HEK293T (cell line): ENCODE measurements at regions of chr11 and their contacts with region 1.

Region 1: DNA sequence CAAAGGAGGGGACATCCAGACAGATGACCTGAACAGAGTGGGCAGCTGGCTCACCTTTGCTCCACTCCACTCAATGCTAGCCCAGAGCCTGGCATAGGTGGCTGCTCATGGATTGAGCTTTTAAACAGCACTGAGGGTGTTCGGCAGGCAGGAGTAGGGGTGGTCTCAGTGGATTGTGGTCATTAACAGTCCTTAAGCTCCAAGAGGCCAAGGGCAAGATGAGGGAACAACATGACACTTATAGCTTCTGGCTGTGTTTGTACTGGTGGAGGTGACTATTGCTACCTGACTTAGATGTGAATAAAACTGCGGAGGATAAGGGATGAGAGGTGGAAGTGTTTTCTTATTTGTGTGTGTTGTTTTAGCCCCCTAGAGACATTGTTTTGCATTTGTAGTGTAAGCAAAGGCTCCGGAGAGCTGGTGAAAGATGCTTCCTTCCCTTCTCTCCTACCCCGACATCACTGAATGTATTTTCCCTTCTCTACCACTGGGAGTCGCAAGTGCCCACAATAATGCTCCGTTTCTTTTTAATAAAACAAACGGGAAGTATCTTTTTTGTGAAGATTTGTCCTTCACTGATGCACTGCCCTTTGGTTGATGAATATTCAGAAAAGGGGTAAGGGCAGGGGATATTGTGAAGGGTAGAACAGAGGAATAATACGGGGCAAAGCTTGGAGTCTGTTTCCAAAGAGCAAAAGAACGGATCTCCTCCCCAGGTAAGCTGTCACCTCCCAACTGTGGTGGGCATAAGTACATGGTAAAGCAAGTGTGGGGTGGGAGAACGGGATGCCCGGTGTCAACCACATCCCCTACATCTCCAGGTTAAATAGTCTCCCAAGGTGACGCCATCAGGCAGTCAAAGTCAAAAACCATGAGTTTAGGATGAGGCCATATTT is 27.5 kb upstream of the MTNR1B start:
- DNase-seq: peak; percentile 61

Region 2: GRCh38 chr11:93225662-93226061 is 283.7 kb after region 1 on chr11:
- CTCF ChIA-PET with region 1: interaction called, 10 read pairs
- POLR2A ChIA-PET with region 1: no interaction called
- DNase-seq: no peak